ENCODE measurements at regions of chr7 and their contacts with region 1.

Region 1: DNA sequence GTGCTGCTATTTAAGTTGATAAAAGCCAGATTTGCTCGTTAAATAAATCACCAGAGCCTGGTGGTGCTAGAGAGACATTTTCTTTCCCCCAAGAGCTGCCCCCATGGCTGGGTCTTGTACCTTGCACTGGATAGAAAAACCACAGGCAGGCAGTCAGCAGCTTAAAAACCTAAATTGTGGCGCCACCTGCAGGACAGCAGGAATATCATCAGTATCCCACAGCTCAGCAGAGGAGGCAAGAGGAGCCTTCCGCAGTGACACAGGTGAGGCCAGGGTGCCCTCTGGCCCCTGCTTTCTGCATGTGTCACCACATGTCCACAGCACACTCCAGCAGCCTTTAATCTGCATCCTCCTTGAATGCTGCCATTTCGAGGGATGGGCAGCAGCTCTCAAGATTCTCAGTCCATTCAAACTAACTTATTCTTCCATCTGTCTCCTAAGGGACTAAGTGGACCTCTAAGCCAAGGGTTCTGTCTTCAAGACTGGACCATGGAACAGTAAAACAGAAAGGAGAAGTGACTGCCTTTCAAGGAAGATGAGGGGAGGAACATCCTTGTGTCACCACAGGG is 4.5 kb upstream of the PLXNA4 start:
- DNase-seq: peak; percentile 83

Region 2: GRCh38 chr7:131604841-131605279 is 975.9 kb before region 1 on chr7:
- intact Hi-C with region 1: no loop called
- DNase-seq: no peak

Region 3: DNA sequence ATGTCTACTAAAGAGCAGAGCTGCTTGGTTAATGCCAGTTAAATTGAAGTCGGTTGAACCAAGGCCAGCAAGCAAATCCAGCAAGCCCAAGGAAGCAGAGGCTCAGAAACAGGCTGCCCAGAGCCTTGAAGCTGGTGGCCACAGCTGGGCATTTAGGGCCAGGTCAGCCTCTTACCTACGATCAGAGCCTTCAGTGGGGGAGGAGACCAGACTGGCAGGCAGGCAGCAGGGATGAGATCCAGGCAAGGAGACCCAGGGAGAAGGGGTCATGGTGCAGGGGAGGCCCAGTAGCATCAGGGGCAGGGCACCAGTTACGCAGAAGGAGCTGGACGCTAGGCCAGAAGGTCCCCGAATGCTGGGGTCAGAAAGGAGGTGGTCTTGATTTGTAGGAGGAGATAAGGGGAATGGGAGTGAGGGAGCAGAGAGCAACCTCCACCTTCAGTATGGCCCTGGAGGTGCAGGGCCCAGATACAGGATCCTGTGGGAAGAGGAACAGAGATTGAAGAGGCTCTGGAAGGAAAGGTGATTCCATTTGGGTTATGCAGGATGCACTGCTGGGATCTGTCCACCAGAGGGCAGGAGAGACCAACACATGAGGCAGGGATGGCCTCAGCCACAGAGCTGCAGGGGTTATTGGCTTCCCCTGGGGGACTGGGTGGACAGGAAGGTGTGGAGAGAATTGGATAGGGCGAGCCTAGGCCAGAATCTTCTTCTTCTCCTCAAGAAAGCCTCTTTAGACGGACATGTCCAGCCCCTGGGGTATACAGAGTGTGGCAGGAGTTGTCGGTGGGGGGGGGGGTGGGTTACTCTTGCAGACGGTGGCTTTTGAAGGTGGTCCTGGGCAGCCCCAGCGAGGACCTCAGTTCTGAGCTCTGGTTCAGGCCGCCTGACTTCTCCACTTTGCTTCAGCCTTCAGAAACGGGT is 891.8 kb before region 1 on chr7:
- intact Hi-C with region 1: loop called (anchors 10 kb)
- DNase-seq: no peak

Region 4: DNA sequence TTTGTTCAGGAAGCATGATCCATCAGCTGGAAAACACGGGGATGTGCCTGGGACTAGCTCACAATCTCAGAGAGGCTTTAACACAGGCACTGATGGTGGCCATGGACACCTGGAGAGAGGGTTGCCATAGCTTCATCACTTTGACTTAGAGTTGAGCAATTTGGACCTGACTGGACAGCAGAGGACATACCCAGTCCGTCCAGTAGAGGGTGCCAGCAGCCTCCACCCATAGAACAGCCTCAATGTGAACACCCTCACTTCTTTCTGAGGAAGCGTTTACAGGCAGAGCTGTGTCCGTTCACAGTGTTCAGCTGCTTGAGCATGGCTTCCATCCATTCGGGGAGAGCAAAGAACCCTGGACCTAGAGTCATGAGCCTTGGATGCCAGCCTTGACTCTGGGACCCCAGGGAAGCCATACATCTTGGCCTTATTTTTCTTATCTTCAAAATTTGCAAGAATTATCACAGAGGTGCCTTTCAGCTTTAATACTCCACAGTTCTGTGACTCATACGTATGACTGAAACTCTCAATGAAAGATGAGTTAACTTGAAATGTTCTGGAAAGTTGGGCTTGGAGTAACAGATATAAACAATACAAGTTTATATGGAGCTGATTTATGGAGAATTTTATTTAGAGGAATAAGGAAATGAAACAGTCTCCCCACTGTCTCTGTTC is 721.5 kb before region 1 on chr7:
- intact Hi-C with region 1: loop called in 1 of 2 experiments (anchors 10 kb)
- DNase-seq: peak; percentile 83

Region 5: DNA sequence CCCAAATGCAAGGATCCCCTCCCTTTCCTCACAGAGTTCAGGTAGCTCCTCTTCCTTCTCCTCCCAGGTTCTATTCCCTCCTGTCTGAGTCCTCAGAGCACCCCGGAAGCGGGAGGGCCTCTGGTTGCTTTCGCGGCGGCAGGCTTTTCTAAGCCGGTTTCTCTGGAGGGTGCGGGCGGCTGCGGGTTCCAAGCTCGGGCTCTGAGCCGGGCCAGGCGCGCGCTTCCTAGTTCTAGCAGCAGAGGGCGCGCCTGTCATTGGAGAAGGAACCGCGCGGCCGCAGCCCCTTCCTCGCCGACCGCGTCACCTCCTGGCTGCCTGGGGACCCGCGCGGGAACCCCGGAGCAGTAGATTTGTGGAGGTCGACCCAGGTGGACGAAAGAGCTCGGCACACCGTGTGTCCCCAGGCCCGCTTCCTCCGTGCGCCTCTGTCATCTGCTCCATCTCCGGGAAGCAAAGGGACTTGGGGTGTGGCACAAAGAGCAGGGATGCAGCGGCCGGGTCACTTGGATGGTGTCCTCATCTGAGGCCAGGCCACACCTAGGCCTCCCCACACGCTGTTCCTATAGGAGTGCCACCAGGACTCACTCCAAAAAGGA is 635.4 kb before region 1 on chr7:
- intact Hi-C with region 1: loop called (anchors 5 to 10 kb)
- DNase-seq: peak; percentile 83

Region 6: GRCh38 chr7:132318352-132319318 is 262.2 kb before region 1 on chr7:
- intact Hi-C with region 1: loop called in 1 of 2 experiments (anchors 5 kb)
- DNase-seq: peak; percentile 96

Region 7: DNA sequence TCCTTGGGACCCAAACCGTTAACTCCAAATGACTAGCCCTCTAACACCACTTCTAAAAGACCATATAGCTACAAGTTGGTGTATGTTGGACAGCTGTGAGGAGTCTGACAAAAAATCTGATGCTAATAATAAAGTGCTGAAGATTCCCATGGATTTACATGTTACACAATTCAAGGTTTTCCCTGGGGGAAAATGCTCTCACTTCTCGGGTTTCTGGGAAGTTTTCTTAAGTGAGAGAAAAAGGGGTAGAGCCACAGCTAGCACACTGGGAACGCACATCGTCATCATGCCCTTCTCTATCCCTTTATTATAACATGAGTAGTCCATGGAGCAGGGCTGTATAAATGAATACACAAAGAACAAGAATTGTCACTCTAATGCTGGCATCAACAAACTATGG is 339.0 kb after region 1 on chr7:
- intact Hi-C with region 1: no loop called
- DNase-seq: no peak